Caco-2 (cell line): ENCODE measurements at regions of chr11 and their contacts with region 1.

Region 1: GRCh38 chr11:84524422-84525051 is 1102.6 kb downstream of the DLG2 start:
- DNase-seq: no peak
- H3K4me3 ChIP-seq: no peak overlapping the region
- H3K4me3 Mint-ChIP-seq: no peak overlapping the region
- H3K27ac Mint-ChIP-seq: no peak overlapping the region
- H3K4me1 ChIP-seq: no peaks in the 10 kb centered on the region
- H3K4me1 Mint-ChIP-seq: no peaks in the 10 kb centered on the region
- H3K27me3 ChIP-seq: no peaks in the 10 kb centered on the region; the same call in 1 of the 2 replicates
- H3K27me3 Mint-ChIP-seq: peaks cover 13% of the 10 kb centered on the region
- CTCF ChIP-seq: peak; percentile 74 to 78

Region 2: DNA sequence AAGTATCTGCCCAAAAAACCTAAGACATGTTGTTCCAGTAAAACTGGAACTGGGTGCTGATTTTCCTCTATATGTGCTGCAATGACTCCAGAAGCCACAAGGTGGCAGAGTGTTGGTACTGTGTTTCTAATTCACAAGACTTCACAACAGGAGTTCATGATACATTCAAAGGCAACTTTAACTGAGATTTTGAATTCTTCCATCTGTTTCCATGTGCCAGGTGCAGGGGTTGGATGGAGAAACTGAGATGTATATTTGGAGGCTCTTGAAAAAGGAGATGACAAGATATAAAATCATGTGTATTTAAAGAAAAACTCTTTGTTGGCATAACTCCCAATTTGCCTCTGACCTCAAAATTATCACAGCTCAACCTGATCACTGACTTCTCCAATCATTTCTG is 139.8 kb before region 1 on chr11:
- CTCF ChIA-PET with region 1: interaction called, 10 read pairs
- POLR2A ChIA-PET with region 1: no interaction called
- intact Hi-C with region 1: loop called (anchors 1 kb)
- DNase-seq: peak; percentile 60 to 68
- H3K4me3 ChIP-seq: no peak overlapping the region
- H3K4me3 Mint-ChIP-seq: no peak overlapping the region
- H3K27ac Mint-ChIP-seq: no peak overlapping the region
- H3K4me1 ChIP-seq: no peaks in the 10 kb centered on the region
- H3K4me1 Mint-ChIP-seq: no peaks in the 10 kb centered on the region
- H3K27me3 ChIP-seq: no peaks in the 10 kb centered on the region; the same call in 1 of the 2 replicates
- H3K27me3 Mint-ChIP-seq: no peaks in the 10 kb centered on the region
- CTCF ChIP-seq: peak; percentile 93 to 96

Region 3: DNA sequence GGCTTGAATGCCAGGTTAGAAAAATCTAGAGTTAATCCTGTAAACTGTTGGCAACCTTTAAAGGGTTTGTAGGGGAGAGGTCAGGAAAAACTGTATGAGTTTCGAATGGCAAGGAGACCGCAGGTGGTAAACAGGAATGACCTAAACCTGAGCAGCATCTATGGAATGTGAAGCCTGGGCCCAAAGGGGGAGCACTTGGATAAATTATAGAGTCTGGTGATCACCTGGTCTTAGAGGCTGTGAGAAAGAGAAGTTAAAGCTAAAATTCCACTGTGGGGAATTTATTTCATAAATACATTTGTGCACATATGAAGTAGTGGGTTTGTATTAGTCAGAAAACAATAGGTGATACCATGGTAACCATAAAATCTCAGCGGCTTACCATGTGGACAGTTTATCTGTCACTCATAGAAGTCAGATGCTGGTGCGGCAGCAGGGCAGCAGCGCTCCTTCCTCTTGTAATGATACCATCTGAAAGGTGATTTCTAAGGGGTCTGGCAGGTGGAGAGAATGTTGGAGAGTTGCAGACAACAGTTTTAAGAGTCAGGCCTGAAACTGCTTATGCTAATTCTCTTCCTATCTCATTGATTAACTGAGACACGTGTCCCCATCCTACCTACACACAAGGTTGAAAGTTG is 134.0 kb before region 1 on chr11:
- CTCF ChIA-PET with region 1: interaction called, 10 read pairs
- POLR2A ChIA-PET with region 1: no interaction called
- intact Hi-C with region 1: no loop called
- DNase-seq: peak in 1 of 2 experiments; percentile 38
- H3K4me3 ChIP-seq: no peak overlapping the region
- H3K4me3 Mint-ChIP-seq: no peak overlapping the region
- H3K27ac Mint-ChIP-seq: no peak overlapping the region
- H3K4me1 ChIP-seq: no peaks in the 10 kb centered on the region
- H3K4me1 Mint-ChIP-seq: no peaks in the 10 kb centered on the region
- H3K27me3 ChIP-seq: no peaks in the 10 kb centered on the region
- H3K27me3 Mint-ChIP-seq: peaks cover 3% of the 10 kb centered on the region
- CTCF ChIP-seq: peak; percentile 20 to 25

Region 4: GRCh38 chr11:84398017-84398626 is 126.4 kb before region 1 on chr11:
- CTCF ChIA-PET with region 1: interaction called, 18 read pairs
- POLR2A ChIA-PET with region 1: no interaction called
- intact Hi-C with region 1: loop called (anchors 1 kb)
- DNase-seq: peak; percentile 43 to 47
- H3K4me3 ChIP-seq: no peak overlapping the region
- H3K4me3 Mint-ChIP-seq: no peak overlapping the region
- H3K27ac Mint-ChIP-seq: no peak overlapping the region
- H3K4me1 ChIP-seq: no peaks in the 10 kb centered on the region
- H3K4me1 Mint-ChIP-seq: no peaks in the 10 kb centered on the region
- H3K27me3 ChIP-seq: no peaks in the 10 kb centered on the region
- H3K27me3 Mint-ChIP-seq: peaks cover 6% of the 10 kb centered on the region
- CTCF ChIP-seq: peak; percentile 71 to 81

Region 5: DNA sequence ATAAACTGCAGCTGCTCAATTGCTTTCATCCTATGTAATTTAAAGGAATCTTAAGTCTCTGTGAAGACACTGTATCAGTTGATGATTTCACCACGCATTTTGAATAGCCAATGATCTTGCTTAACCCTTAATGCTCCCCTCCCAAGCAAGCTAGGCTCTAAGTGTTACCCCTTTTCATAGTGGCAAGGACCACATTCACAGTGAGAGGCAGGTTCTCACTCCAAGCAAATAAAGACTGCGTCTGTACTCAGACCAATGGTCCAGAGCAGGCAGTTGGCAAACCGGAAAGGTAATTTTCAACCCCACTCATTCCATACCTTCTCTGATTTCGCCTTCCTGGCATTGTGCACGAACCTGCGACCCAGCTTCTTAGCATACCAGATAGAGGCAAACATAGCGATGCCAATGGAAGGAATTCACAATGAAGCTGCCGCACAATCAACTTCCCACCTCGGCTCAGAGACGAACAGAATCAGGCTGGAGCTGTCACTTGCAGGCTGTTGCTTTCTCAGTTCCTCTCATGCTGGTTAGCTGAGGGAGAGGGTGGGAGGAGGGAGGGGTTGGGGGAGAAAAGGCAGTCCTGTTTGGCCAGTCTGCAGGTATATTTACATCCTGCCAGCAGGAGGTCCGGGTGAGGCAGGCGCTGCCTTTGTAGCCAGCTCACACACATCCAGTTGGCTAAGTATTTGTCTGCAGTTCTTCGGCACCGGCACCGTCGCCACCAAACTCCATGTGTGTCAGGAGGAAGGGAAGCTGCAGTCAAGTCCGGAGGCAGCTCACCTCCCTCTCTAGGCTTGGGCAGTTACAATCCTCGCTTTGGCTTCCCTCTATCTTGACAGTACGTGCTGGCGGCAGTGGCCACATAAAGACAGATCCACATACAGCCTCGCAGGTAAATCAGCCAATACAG is 87.2 kb before region 1 on chr11:
- CTCF ChIA-PET with region 1: interaction called, 4 read pairs
- POLR2A ChIA-PET with region 1: no interaction called
- intact Hi-C with region 1: loop called (anchors 5 kb)
- DNase-seq: peak; percentile 54 to 64
- H3K4me3 ChIP-seq: no peak overlapping the region
- H3K4me3 Mint-ChIP-seq: peak overlapping the region; percentile 2
- H3K27ac Mint-ChIP-seq: no peak overlapping the region
- H3K4me1 ChIP-seq: no peaks in the 10 kb centered on the region; the same call in 1 of the 2 replicates
- H3K4me1 Mint-ChIP-seq: no peaks in the 10 kb centered on the region
- H3K27me3 ChIP-seq: no peaks in the 10 kb centered on the region
- H3K27me3 Mint-ChIP-seq: peaks cover 15% of the 10 kb centered on the region
- CTCF ChIP-seq: peak in 1 of 2 experiments; percentile 18

Region 6: GRCh38 chr11:84497981-84498411 is 26.5 kb before region 1 on chr11:
- CTCF ChIA-PET with region 1: interaction called, 3 read pairs
- POLR2A ChIA-PET with region 1: no interaction called
- intact Hi-C with region 1: loop called (anchors 2 kb)
- DNase-seq: no peak
- H3K4me3 ChIP-seq: no peak overlapping the region
- H3K4me3 Mint-ChIP-seq: no peak overlapping the region
- H3K27ac Mint-ChIP-seq: no peak overlapping the region
- H3K4me1 ChIP-seq: no peaks in the 10 kb centered on the region
- H3K4me1 Mint-ChIP-seq: no peaks in the 10 kb centered on the region
- H3K27me3 ChIP-seq: no peaks in the 10 kb centered on the region
- H3K27me3 Mint-ChIP-seq: peaks cover 2% of the 10 kb centered on the region
- CTCF ChIP-seq: no peak